Vagina (tissue), 2 donors: ENCODE measurements at regions of chr19 and their contacts with region 1.

Region 1: DNA sequence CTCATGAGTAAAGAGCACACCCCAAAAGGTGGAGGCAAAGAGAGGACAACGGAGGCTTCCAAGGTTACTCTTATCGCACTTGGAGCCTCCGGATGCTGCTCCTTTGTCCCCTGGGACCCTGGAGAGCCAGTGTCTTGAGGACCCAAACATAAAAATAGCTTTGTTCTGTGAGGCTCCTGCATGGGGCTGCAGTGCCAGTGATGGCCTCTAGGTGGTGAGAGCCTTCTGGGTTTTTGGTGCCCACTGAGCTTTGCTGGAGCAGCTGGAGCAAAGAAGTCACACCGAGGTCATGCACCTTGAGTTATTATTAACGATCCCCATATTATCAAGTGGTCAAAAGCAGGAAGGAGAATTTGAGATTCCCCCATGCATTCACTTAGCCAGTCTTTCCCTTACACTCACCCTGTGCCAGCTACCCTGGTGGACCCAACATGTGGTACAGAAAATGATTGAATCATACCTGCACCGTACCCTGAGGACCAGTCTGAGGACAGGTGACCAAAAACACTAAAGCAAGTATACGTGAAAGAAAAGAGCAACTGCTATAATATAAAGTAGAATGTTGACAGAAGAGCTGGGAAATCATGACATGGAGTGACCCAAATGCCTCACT is 41.5 kb downstream of the ZNF682 start:
- DNase-seq: no peak
- H3K4me3 ChIP-seq: no peak overlapping the region
- H3K27ac ChIP-seq: no peak overlapping the region
- H3K4me1 ChIP-seq: no peaks in the 10 kb centered on the region
- H3K27me3 ChIP-seq: no peaks in the 10 kb centered on the region
- CTCF ChIP-seq: peak in 2 of 3 experiments; percentile 50 to 81
- POLR2A ChIP-seq: no peak

Region 2: DNA sequence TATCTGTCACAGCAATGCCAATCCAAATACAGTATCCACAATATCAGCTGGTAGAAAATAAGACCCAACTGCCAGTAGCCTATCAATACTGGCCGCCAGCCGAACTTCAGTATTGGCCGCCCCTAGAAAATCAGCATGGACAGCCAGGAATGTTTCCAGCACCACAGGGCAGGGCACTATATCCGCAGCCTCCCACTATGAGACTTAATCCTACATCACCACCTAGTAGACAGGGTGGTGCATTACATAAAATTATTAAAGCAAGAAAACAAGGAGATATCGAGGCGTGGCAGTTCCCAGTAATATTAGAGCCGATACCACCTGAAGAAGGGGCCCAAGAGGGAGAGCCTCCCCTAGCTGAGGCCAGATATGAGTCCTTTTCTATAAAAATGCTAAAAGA is 280.6 kb after region 1 on chr19:
- intact Hi-C with region 1: loop called (anchors 10 kb)
- DNase-seq: no peak
- H3K4me3 ChIP-seq: no peak overlapping the region
- H3K27ac ChIP-seq: no peak overlapping the region
- H3K4me1 ChIP-seq: peaks cover 10% of the 10 kb centered on the region
- H3K27me3 ChIP-seq: no peaks in the 10 kb centered on the region
- CTCF ChIP-seq: peak in 2 of 3 experiments; percentile 16 to 68
- POLR2A ChIP-seq: no peak